ENCODE measurements at regions of chr3 and their contacts with region 1.

Region 1: DNA sequence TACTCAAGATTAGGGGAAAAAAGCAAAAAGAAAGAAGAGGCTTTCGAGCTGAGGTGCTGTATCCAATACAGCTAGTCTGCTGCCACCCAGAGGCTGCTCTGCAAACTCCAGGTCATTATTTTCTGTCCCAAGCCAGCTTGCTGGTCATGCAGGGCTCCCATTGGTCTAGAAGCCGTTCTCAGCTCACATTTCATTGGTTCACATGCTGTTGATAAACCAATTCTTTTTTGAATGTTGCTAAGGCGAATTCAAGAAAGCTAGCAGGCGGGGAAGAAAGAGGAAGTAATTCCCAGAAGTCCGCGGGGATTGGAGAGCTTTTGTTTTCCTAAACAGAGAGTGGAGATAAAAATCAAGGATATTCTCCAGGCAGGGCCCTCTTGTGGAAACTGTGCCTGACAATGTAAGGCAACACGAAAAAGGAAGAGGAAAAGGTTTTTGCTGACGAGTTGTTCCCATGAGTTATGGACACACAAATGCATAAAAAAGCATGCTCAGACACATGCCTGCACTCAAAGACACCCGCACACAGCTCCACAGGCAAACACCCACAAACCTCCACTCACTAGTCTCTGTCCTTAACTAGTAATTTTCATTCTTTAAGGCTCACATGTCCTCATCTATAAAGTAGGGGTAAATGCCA is 33.4 kb downstream of the FSTL1 start:
- DNase-seq: peak; percentile 94

Region 2: GRCh38 chr3:120095226-120095978 is 322.0 kb before region 1 on chr3:
- intact Hi-C with region 1: loop called (anchors 10 kb)
- DNase-seq: peak; percentile 93

Region 3: DNA sequence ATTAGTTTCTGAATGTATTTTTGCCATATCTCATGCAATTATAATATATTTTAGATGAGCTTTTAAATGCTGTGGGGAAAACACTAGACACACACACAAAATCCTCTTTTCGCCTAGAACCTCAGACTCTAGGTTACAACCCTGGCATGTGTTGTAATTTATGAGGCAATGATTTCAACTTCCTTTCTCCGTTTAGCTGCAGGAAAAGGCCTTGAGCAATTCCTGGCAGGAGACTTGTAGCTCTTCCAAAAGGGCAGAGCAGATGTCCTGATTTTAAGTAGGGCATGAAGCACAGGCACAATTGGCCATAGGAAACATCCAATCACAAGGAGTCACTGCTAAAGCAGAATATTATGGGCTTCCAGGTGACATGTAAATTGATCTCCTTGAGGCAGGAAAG is 214.4 kb before region 1 on chr3:
- intact Hi-C with region 1: no loop called
- DNase-seq: no peak

Region 4: DNA sequence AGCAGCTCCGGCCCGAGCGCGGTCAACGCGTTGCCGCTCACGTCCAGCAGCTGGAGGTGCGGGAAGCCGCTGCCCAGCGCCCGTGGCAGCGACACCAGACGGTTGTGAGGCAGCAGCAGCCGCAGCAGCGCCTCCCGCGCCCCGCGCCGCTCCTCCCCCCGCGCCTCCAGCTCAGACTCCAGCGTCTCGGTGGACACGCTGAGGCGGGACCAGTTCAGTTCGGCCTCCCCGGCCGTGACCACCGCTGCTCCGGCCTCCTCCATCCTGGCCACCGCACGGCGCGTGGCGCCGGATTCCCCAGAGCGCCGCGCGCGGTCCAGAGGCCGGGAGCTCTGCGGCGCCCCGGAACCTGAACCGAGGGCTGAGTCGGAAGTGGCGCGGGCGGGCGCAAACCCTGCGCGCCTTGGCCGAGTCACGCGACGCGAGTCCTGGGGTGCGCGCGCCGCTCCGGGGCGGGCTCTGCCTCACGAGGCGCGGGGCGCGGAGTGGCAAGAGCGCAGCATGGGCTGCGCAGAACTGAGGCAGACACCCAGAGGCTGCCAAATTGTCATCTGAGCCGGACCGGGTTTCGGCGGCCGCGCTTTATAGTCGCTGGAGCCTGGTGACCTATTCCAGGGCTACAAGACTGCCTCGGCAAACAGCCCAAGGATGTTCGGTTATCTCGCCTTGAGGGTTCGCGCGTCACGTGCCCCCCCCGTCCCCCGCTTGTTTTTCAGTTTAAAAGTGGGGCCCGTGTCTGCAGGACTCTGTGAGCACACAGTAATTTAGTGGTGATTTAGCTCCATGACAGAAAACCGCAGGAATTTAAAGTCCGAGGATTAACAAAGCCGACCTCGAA is 68.2 kb before region 1 on chr3 and contains the start of gene LRRC58:
- intact Hi-C with region 1: loop called (anchors 5 kb)
- DNase-seq: peak; percentile 93
- total RNA-seq, gene LRRC58: 8.1 TPM

Region 5: DNA sequence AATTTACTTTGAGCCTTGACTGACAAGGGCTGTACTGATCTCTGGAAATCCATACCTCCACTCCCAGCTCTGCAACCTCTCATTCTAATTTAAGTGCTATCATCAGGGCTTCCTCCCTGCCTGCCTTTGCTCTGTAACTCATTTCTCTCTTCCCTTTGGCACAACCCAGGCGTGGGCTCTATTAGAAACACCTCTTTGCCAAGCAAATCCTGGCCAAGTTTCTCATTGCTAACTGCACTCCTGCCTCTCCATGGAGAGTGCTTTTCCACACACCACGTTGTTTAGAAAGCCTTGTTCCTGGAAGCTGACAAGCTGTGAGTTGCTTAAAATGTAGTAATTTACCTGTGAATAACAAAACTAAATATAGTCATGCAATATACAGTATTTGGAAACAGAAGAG is 53.5 kb after region 1 on chr3:
- intact Hi-C with region 1: loop called (anchors 2 kb)
- DNase-seq: no peak

Region 6: DNA sequence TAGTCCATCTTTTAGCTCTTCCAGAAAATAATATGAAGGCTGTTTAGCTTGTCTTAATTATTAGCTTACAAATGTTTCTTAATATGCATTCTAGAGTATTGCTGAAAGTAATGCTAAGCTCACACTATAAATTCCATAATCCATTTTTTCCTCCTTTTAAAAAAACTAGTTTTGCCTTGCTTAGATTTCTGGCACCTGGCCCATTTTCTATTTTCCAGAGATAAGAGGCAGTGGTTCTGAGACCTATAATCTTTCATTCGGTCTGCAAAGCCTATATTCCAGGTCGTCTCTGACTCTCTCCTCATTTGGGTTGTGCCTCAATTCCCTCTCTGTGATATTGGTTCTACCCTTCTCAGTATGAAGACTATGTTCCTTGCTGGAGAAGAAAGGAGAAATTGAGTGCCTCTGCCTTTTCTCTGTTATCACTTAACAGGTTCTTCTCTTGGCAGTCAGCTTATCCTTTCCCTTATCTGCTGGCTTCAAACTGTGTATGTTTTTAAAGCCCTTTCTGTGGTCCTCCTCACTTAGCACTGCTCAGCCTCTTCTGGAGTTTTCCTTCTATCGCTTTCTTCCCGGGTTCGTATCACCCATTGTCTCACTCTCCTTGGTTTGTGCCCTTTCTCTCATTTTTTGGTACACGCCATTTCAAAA is 98.6 kb after region 1 on chr3:
- intact Hi-C with region 1: no loop called
- DNase-seq: no peak

Region 7: GRCh38 chr3:120558771-120559241 is 141.4 kb after region 1 on chr3:
- intact Hi-C with region 1: loop called (anchors 1 kb)
- DNase-seq: peak; percentile 94

Region 8: DNA sequence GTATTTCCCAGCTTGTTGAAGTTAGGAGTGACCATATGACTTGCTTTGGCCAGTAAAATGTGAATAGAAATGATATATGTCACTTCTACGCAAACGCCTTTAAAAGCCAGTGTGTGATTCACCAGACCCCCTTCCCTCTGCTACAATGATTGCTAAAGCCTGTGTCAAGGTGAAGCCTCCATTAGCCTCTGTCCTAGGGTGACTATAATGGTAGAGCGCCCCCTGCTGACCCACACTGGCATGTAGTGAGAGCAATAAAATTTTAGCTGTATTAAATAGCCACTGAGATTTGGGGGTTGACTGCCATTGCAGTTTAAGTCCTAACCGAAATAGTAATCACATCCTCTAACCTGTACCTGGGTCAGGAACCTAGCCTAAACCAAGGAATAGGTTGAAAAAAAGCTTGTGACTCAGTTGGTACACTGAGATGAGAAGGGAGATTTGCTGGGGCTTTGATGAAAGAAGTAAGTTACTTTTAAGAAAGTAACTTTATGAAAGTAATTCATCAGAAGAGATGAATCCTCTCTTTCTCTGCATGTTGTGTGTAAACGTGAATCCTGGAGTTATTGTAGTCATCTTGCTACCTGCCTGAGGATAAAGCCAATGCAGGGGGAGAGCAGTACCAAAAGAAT is 377.7 kb after region 1 on chr3:
- intact Hi-C with region 1: loop called (anchors 10 kb)
- DNase-seq: peak; percentile 84

Measured in cardiac septum (tissue), 1 donor.